Left ventricle myocardium inferior (tissue), 1 donor: ENCODE measurements at regions of chr9 and their contacts with region 1.

Region 1: GRCh38 chr9:127921557-127922120 is 4.8 kb upstream of the ST6GALNAC4 start:
- DNase-seq: peak; percentile 70
- H3K4me3 ChIP-seq: peak overlapping the region; percentile 51
- H3K27ac ChIP-seq: no peak overlapping the region
- H3K4me1 ChIP-seq: peaks cover 43% of the 10 kb centered on the region
- H3K27me3 ChIP-seq: peaks cover 44% of the 10 kb centered on the region
- CTCF ChIP-seq: peak; percentile 98

Region 2: GRCh38 chr9:127503947-127504782 is 417.5 kb before region 1 on chr9:
- intact Hi-C with region 1: loop called (anchors 10 kb)
- DNase-seq: peak; percentile 86
- H3K4me3 ChIP-seq: no peak overlapping the region
- H3K27ac ChIP-seq: peak overlapping the region; percentile 20
- H3K4me1 ChIP-seq: peaks cover 12% of the 10 kb centered on the region
- H3K27me3 ChIP-seq: no peaks in the 10 kb centered on the region
- CTCF ChIP-seq: peak; percentile 93

Region 3: GRCh38 chr9:127785023-127785932 is 136.4 kb before region 1 on chr9:
- intact Hi-C with region 1: loop called (anchors 5 kb)
- DNase-seq: peak; percentile 89
- H3K4me3 ChIP-seq: peak overlapping the region; percentile 90
- H3K27ac ChIP-seq: peak overlapping the region; percentile 98
- H3K4me1 ChIP-seq: peaks cover 68% of the 10 kb centered on the region
- H3K27me3 ChIP-seq: no peaks in the 10 kb centered on the region
- CTCF ChIP-seq: peak; percentile 87